Dendritic cell treated with granulocyte-macrophage colony-stimulating factor and Interleukin-4, amounts not matched to agents 40 ng/mL and 50 ng/mL, for 4 days (primary cell): ENCODE measurements at regions of chr7 and their contacts with region 1.

Region 1: GRCh38 chr7:106346678-106347217 is 62.0 kb upstream of the NAMPT start:
- H3K4me3 Mint-ChIP-seq: no peak overlapping the region
- H3K27ac Mint-ChIP-seq: peak overlapping the region; percentile 91
- H3K4me1 Mint-ChIP-seq: peaks cover 45% of the 10 kb centered on the region
- H3K27me3 Mint-ChIP-seq: no peaks in the 10 kb centered on the region

Region 2: GRCh38 chr7:106313966-106314365 is 32.8 kb before region 1 on chr7:
- intact Hi-C with region 1: loop called (anchors 1 kb)
- H3K4me3 Mint-ChIP-seq: peak overlapping the region; percentile 10
- H3K27ac Mint-ChIP-seq: peak overlapping the region; percentile 75
- H3K4me1 Mint-ChIP-seq: peaks cover 21% of the 10 kb centered on the region
- H3K27me3 Mint-ChIP-seq: peaks cover 4% of the 10 kb centered on the region

Region 3: GRCh38 chr7:106425017-106425719 is 78.4 kb after region 1 on chr7:
- intact Hi-C with region 1: loop called (anchors 2 kb)
- H3K4me3 Mint-ChIP-seq: no peak overlapping the region
- H3K27ac Mint-ChIP-seq: peak overlapping the region; percentile 87
- H3K4me1 Mint-ChIP-seq: peaks cover 57% of the 10 kb centered on the region
- H3K27me3 Mint-ChIP-seq: peaks cover 2% of the 10 kb centered on the region